Activated B cell treated with CpG ODN at 0.5 μM for 24 hours (primary cell): ENCODE measurements at regions of chr19 and their contacts with region 1.

Region 1: DNA sequence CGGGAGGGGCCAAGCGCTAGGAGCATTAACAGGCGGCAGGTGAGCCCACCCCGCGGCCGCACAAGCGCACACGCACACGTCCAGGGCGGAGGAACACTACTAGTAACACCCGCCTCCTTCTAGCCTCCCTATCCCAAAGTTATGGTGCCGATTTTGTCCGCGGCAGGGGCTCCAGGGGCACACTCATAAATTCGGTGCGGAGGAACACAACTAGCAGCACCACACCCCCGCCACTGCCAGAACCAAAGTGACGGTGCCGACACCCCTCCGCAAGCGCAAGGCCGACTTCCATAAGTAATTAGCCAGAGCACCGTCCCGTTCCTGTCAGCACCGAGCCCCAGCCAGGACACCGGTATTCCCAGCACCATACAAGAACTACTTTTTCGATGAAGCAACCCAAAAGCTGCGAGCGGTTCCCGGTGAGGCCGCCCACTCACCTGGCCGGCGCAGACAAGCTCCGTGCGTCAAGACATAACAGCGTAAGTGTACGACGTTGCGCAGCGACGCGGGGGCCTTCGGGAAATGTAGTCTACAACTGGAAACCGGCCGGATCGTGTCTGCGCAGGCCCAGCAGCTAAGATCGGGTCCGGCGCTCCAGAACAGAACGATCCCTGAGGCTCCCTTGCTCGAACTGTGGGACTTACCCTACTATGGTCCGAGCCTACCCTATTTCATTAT is at the starts of genes ZNF540 and ZNF571:
- DNase-seq: peak; percentile 83
- ATAC-seq: peak; percentile 97
- H3K4me3 Mint-ChIP-seq: peak within 1 kb of the TSS; percentile 98
- H3K27ac Mint-ChIP-seq: peak within 1 kb of the TSS; percentile 97
- H3K4me1 Mint-ChIP-seq: peaks cover 23% of the 10 kb centered on the region
- H3K27me3 Mint-ChIP-seq: no peaks in the 10 kb centered on the region
- CTCF ChIP-seq: no peak
- total RNA-seq, gene ZNF540: 1.9 and 2.9 TPM in 2 replicates
- total RNA-seq, gene ZNF571: 5.0 and 5.2 TPM in 2 replicates

Region 2: GRCh38 chr19:36214386-36215275 is 1379.8 kb before region 1 on chr19 and contains the starts of genes ZNF146 and ZNF565:
- CTCF ChIA-PET with region 1: no interaction called
- POLR2A ChIA-PET with region 1: interaction called, 3 read pairs
- intact Hi-C with region 1: loop called (anchors 10 kb)
- DNase-seq: peak; percentile 90
- ATAC-seq: peak; percentile 90
- H3K4me3 Mint-ChIP-seq: no peak within 1 kb of the TSS
- H3K27ac Mint-ChIP-seq: no peak within 1 kb of the TSS
- H3K4me1 Mint-ChIP-seq: peaks cover 29% of the 10 kb centered on the region
- H3K27me3 Mint-ChIP-seq: no peaks in the 10 kb centered on the region
- CTCF ChIP-seq: no peak
- total RNA-seq, gene ZNF146: 57.8 and 63.2 TPM in 2 replicates
- total RNA-seq, gene ZNF565: 2.3 and 3.2 TPM in 2 replicates

Region 3: DNA sequence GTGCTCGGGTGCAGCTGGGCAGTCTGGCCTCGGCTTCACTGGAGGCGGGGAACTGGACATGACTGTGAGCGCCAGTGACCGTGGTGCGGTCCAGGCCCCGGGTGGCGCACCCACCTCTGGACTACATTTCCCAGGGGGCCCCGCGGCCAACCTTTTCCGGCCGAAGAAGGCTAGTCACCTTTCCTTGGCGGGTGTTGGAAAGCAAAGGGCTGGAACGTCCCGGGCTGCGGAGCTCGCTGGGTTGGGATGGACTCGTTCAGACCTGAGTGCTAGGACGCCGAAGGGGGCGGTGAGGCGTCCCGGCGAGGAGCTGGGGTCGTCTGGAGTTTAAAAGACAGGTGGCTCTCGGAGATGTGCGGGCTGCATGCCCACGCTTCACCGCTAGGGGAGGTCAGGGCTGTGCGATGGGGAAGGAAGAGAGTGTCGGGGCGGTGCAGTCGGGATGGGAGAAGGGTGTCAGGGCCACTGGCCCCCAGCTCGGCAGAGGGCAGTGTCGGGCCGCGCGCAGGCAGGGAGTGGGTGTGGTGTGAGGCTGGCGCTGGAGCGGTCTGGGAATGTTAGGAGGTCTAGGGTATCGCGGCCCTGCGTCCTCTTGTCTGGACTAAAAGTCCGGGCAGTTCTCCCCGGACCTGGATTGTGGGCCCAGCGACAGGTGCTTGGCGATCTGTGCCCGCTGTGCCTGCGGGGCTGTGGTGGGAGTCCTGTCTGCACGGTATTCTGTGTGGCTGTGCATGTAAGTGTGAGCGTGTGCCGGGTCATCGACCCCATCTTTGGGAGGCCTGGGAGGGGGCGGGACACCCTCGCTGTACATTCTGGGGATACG is 621.2 kb before region 1 on chr19:
- CTCF ChIA-PET with region 1: no interaction called
- POLR2A ChIA-PET with region 1: no interaction called
- intact Hi-C with region 1: loop called (anchors 1 kb)
- DNase-seq: peak; percentile 75
- ATAC-seq: peak; percentile 97
- H3K4me3 Mint-ChIP-seq: peak overlapping the region; percentile 98
- H3K27ac Mint-ChIP-seq: peak overlapping the region; percentile 94
- H3K4me1 Mint-ChIP-seq: peaks cover 10% of the 10 kb centered on the region
- H3K27me3 Mint-ChIP-seq: no peaks in the 10 kb centered on the region
- CTCF ChIP-seq: peak; percentile 38

Region 4: DNA sequence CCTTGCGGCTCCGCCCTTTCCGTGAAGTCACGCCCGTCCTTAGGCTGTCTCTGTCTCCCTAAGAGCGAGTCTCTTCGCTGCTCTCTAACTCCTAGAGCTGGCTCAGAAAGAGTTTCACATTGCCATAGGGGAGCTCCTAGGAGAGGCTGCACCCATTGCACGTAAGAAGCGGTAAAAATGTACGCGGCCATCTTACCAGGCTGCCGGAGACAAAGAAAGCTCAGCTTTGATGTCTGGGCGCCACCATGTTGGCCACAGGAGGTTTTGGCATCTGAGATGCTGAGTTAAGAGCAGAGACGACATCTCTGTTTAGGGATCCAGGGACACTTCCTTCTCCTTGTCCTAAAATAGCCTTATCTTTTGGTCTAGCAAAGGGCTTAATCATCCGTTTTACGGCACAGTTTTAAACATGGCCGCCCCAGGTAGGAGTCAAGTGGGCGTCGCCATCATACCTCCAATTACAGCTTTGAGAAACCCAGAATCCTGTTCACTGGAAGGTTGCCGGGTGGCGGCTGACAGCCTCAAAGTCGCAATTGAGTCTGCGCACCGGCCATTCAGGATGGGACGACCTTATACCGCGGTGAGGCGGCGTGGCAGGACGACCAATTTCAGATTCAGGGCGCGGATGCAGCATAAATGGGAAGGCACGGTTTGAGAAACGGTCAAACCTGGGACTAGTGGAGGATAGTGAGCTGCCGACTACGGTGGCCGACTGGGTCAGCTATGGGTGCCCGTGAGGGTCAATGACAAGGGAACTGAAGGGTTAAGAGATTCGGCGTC is 87.9 kb before region 1 on chr19 and contains the start of gene ZNF793:
- CTCF ChIA-PET with region 1: no interaction called
- POLR2A ChIA-PET with region 1: interaction called, 26 read pairs
- intact Hi-C with region 1: loop called (anchors 1 kb)
- DNase-seq: peak; percentile 70
- ATAC-seq: peak; percentile 87
- H3K4me3 Mint-ChIP-seq: no peak within 1 kb of the TSS
- H3K27ac Mint-ChIP-seq: no peak within 1 kb of the TSS
- H3K4me1 Mint-ChIP-seq: peaks cover 2% of the 10 kb centered on the region
- H3K27me3 Mint-ChIP-seq: no peaks in the 10 kb centered on the region
- CTCF ChIP-seq: no peak
- total RNA-seq, gene ZNF793: 8.4 and 8.7 TPM in 2 replicates

Region 5: GRCh38 chr19:37655689-37656371 is 61.4 kb after region 1 on chr19:
- CTCF ChIA-PET with region 1: no interaction called
- POLR2A ChIA-PET with region 1: interaction called, 11 read pairs
- intact Hi-C with region 1: loop called (anchors 1 kb)
- DNase-seq: peak; percentile 80
- ATAC-seq: peak; percentile 67
- H3K4me3 Mint-ChIP-seq: peak overlapping the region; percentile 95
- H3K27ac Mint-ChIP-seq: peak overlapping the region; percentile 95
- H3K4me1 Mint-ChIP-seq: peaks cover 28% of the 10 kb centered on the region
- H3K27me3 Mint-ChIP-seq: no peaks in the 10 kb centered on the region
- CTCF ChIP-seq: no peak

Region 6: GRCh38 chr19:37719111-37719926 is 124.9 kb after region 1 on chr19 and contains the start of gene ZNF607:
- CTCF ChIA-PET with region 1: no interaction called
- POLR2A ChIA-PET with region 1: interaction called, 8 read pairs
- intact Hi-C with region 1: loop called (anchors 1 kb)
- DNase-seq: peak; percentile 84
- ATAC-seq: peak; percentile 94
- H3K4me3 Mint-ChIP-seq: peak within 1 kb of the TSS; percentile 94
- H3K27ac Mint-ChIP-seq: peak within 1 kb of the TSS; percentile 91
- H3K4me1 Mint-ChIP-seq: peaks cover 17% of the 10 kb centered on the region
- H3K27me3 Mint-ChIP-seq: no peaks in the 10 kb centered on the region
- CTCF ChIP-seq: no peak
- total RNA-seq, gene ZNF607: 9.6 and 10.3 TPM in 2 replicates